MCF 10A (cell line): ENCODE measurements at regions of chr17 and their contacts with region 1.

Region 1: DNA sequence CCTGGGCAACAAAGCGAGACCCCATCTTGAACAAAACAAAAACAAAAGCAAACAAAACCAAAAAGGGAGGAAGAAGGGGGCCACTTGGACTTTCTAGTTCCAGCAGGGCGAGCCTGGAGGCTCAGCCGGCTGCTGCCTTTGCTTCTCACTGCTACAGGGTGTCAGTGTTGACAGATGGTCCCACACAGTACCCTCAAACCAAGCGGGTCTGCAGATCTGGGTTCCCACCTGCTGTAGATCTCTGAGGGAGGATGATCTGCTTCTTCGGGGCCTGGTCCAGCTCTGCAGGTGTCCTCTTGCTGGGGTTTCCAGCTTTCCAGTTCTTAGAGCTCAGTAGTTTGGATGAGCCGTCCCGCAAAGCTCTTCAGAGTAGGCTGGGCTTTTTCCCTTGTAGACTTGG is 6.7 kb downstream of the CSHL1 start:
- DNase-seq: no peak
- H3K4me3 Mint-ChIP-seq: no peak overlapping the region
- H3K27ac Mint-ChIP-seq: no peak overlapping the region
- H3K4me1 Mint-ChIP-seq: peaks cover 4% of the 10 kb centered on the region
- H3K27me3 Mint-ChIP-seq: peaks cover 48% of the 10 kb centered on the region
- CTCF ChIP-seq: no peak

Region 2: GRCh38 chr17:63881876-63882601 is 22.3 kb before region 1 on chr17 and contains the start of gene GH2:
- CTCF ChIA-PET with region 1: interaction called, 11 read pairs
- POLR2A ChIA-PET with region 1: no interaction called
- intact Hi-C with region 1: no loop called
- DNase-seq: peak; percentile 54
- H3K4me3 Mint-ChIP-seq: no peak within 1 kb of the TSS
- H3K27ac Mint-ChIP-seq: no peak within 1 kb of the TSS
- H3K4me1 Mint-ChIP-seq: no peaks in the 10 kb centered on the region
- H3K27me3 Mint-ChIP-seq: peaks cover 37% of the 10 kb centered on the region
- CTCF ChIP-seq: peak; percentile 54
- total RNA-seq, gene GH2: not detected in 2 replicates